Lower lobe of right lung (tissue), 2 donors: ENCODE measurements at regions of chr9 and their contacts with region 1.

Region 1: DNA sequence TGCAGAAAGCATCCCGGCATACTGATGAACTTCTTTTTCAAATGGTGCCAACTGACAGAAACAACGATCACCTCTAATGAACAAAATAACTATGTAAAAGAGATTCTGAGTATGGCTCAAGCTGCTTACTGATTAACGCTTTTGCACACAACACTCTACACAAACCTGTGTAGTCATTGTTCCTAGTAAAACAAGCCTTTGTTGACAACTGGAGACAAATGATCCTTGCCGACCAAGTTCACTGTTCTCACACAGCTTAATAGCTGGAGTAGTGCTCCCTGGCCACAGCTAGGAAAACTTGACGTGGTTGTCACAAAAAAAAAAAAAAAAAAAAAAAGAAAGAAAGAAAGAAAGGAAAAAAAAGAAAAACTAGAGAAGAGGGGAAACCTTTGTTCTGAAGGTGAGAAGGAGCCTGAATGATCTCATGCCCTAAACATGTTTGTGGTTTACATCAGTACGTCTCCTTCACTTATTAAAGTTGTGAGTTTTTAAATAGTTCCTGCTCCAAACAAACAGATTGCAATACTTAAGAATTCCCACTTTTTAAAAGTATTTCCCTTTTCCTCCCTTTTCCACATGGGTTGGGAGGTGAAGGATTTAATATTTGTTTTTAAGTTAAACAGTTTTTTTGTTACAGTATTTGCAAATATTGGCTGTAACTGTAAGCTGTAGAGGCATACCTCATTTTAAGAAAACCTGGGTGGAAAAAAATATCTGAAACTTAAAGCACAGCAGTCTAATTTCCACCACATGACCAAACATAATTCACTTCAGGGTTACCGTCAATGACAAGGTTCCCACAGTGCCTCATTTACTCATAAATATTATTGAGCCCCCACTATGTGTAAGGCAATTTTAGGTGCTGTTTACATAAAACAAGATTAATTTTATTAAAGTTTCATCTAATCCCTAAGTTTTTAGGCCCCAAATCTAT is 63.7 kb downstream of the GLIS3 start:
- DNase-seq: no peak
- ATAC-seq: peak; percentile 63 to 81
- H3K4me3 ChIP-seq: no peak overlapping the region
- H3K27ac ChIP-seq: peak overlapping the region; percentile 37
- H3K4me1 ChIP-seq: peaks cover 8% of the 10 kb centered on the region
- H3K27me3 ChIP-seq: no peaks in the 10 kb centered on the region
- CTCF ChIP-seq: no peak

Region 2: GRCh38 chr9:4086119-4087090 is 149.7 kb before region 1 on chr9:
- intact Hi-C with region 1: no loop called
- DNase-seq: no peak
- ATAC-seq: no peak
- H3K4me3 ChIP-seq: no peak overlapping the region
- H3K27ac ChIP-seq: no peak overlapping the region
- H3K4me1 ChIP-seq: peaks cover 13% of the 10 kb centered on the region
- H3K27me3 ChIP-seq: no peaks in the 10 kb centered on the region
- CTCF ChIP-seq: no peak

Region 3: DNA sequence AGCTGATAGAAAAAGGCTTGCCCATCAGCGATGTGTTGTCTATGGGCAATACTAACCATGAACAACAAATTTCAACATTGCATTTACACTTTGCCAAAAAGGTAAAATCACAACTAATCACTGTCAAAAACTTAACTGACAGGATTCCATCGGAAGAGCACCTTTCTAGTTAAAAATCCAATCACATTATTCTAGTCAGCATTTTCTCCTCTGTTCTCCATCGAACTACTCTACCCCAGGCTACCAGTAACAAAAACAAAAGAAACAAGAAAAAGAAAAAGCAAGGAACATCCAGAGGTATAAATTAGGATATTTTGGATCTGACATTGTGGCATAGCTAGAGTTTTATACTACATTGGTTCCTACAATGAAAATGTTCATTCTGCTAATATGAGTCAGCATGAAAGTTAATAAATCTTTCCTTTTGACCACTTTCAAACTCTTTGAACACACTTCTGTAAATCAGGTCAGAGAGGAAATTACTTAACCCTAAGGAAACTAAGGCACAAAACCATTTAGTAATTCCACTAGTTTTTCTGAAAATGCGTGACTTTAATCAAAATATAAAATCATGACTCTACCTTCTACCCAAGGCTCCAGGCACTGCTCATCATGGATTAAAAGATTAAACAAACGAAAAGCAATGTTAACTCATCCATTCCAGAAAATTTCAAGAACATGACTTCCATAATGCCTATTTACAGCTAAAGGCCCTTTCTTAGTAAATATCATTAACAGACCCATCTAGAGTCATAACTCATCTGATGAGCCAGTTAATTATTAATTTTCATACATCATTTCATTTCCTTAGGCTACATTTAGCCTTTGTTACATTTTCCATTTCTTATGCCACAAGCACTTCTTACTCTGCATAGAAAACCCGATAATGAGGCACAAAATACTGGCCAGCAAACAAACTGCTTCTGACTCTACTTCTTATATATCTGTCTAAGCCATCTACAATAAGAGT is 53.6 kb after region 1 on chr9:
- intact Hi-C with region 1: loop called (anchors 10 kb)
- DNase-seq: no peak
- ATAC-seq: no peak
- H3K4me3 ChIP-seq: no peak overlapping the region
- H3K27ac ChIP-seq: no peak overlapping the region
- H3K4me1 ChIP-seq: peaks cover 5% of the 10 kb centered on the region
- H3K27me3 ChIP-seq: no peaks in the 10 kb centered on the region
- CTCF ChIP-seq: no peak

Region 4: GRCh38 chr9:4630836-4631235 is 394.7 kb after region 1 on chr9:
- intact Hi-C with region 1: no loop called
- DNase-seq: no peak
- ATAC-seq: no peak
- H3K4me3 ChIP-seq: no peak overlapping the region
- H3K27ac ChIP-seq: no peak overlapping the region
- H3K4me1 ChIP-seq: no peaks in the 10 kb centered on the region
- H3K27me3 ChIP-seq: no peaks in the 10 kb centered on the region
- CTCF ChIP-seq: no peak